Right cardiac atrium (tissue), 5 donors: ENCODE measurements at regions of chr18 and their contacts with region 1.

Region 1: GRCh38 chr18:55781481-55781957 is 193.5 kb upstream of the TCF4 start:
- DNase-seq: peak; percentile 41 to 77 (median 61)
- ATAC-seq: peak; percentile 69 to 81
- H3K4me3 ChIP-seq: no peak overlapping the region
- H3K27ac ChIP-seq: peak overlapping the region; percentile 54
- H3K4me1 ChIP-seq: peaks cover 1% of the 10 kb centered on the region
- H3K27me3 ChIP-seq: no peaks in the 10 kb centered on the region

Region 2: DNA sequence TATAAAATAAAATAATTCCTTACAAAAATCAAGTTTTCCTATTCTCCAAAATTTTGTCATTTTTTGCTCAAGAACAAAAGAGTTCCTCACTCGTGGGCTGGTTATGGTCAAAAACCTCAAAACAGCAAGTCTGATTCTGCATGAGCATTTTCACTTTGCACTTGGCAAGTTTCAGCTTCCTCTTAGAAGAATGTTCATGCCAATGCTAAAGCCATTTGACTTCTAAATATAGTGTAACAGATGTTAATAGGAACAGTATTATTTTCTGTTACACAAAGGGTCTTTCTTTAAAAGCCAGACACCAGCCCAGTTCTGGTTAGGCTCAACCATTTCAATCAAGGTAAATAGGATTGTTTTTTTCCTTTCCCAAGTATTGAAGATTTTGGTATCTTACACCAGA is 561.0 kb before region 1 on chr18:
- intact Hi-C with region 1: loop called in 1 of 4 experiments (anchors 10 kb)
- DNase-seq: no peak
- ATAC-seq: no peak
- H3K4me3 ChIP-seq: no peak overlapping the region
- H3K27ac ChIP-seq: no peak overlapping the region
- H3K4me1 ChIP-seq: no peaks in the 10 kb centered on the region
- H3K27me3 ChIP-seq: no peaks in the 10 kb centered on the region

Region 3: GRCh38 chr18:55234366-55235093 is 547.0 kb before region 1 on chr18:
- intact Hi-C with region 1: loop called in 2 of 4 experiments (anchors 2 to 10 kb)
- DNase-seq: peak; percentile 72 to 89 (median 83)
- ATAC-seq: peak; percentile 85 to 94
- H3K4me3 ChIP-seq: no peak overlapping the region
- H3K27ac ChIP-seq: peak overlapping the region; percentile 21
- H3K4me1 ChIP-seq: peaks cover 5% of the 10 kb centered on the region
- H3K27me3 ChIP-seq: no peaks in the 10 kb centered on the region

Region 4: DNA sequence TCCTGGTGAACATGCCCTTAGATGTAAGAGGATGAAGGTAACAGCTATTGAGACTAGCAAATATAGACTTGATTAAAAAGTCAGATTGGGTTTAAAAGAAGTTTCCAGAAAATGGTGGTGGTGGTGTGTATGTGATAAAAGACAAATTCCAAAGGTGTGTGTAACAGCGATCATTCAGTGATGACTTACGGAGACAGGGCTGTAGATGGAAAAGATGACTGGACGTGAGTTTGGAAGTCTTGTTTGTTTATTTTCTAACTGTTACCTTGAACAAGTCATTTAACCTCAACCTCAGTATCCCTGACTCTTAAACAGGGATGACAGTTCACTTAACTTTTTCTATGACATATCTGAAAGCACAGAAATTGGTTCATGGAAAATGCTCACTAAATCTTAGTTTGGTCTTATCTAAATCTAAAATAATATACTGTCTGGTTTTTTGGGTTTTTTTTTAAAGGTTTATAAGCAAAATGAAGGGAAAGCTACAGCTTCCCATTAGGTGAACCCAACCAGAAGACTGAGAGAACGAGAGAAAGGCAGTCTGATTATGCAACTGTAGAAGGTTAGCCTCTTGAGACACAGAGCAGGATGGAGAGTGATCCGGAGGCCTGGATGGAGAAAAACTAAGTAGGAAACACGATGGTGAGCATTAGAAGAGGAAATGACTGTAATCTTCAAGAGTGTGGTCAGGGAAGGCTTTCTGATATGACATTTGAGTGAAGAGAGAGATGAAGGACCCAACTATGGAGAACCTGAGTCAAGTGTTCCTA is 265.4 kb before region 1 on chr18:
- intact Hi-C with region 1: loop called in 1 of 4 experiments (anchors 5 kb)
- DNase-seq: no peak
- ATAC-seq: no peak
- H3K4me3 ChIP-seq: no peak overlapping the region
- H3K27ac ChIP-seq: no peak overlapping the region
- H3K4me1 ChIP-seq: peaks cover 2% of the 10 kb centered on the region
- H3K27me3 ChIP-seq: no peaks in the 10 kb centered on the region

Region 5: DNA sequence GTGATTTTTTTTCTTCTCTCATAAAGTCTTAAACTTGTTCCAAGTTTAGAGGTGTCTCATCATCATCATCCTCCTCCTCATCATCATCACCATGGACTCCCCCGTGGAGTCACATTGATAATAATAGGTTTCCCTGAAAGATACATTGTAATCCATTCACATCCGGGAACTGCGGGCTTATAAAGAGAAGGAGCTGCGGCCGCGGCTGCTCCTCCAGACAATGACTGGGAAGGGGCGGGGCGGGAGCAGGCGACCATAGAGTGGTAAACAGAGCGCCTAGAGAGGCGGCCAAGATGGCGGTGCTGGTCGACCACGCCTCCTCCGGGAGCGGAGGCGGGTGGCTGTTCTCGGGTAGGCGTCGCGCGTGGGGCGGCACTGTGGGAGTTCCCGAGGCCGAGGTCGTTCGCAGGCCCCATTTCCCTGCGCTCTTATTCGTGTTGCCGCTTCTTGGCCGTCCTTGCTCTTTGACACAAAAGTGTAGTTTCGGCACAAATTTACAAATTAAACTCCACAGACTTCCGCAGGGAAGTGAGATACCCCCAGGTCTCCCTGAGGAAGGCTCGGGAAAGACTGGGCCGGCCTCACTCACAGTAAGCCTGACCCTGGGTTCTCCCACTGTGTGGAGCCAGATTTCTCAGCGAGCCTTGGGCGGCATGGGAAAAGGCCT is 191.8 kb before region 1 on chr18:
- intact Hi-C with region 1: loop called in 2 of 4 experiments (anchors 5 to 10 kb)
- DNase-seq: peak; percentile 98 to 99 (median 99)
- ATAC-seq: peak; percentile 97 to 98
- H3K4me3 ChIP-seq: peak overlapping the region; percentile 100
- H3K27ac ChIP-seq: peak overlapping the region; percentile 71
- H3K4me1 ChIP-seq: peaks cover 2% of the 10 kb centered on the region
- H3K27me3 ChIP-seq: no peaks in the 10 kb centered on the region

Region 6: GRCh38 chr18:55863876-55864275 is 82.4 kb after region 1 on chr18:
- intact Hi-C with region 1: no loop called
- DNase-seq: peak in 1 of 3 donors; percentile 51
- ATAC-seq: peak in 1 of 2 donors; percentile 50
- H3K4me3 ChIP-seq: no peak overlapping the region
- H3K27ac ChIP-seq: no peak overlapping the region
- H3K4me1 ChIP-seq: no peaks in the 10 kb centered on the region
- H3K27me3 ChIP-seq: no peaks in the 10 kb centered on the region